Ascending aorta (tissue), 2 donors: ENCODE measurements at regions of chr14 and their contacts with region 1.

Region 1: DNA sequence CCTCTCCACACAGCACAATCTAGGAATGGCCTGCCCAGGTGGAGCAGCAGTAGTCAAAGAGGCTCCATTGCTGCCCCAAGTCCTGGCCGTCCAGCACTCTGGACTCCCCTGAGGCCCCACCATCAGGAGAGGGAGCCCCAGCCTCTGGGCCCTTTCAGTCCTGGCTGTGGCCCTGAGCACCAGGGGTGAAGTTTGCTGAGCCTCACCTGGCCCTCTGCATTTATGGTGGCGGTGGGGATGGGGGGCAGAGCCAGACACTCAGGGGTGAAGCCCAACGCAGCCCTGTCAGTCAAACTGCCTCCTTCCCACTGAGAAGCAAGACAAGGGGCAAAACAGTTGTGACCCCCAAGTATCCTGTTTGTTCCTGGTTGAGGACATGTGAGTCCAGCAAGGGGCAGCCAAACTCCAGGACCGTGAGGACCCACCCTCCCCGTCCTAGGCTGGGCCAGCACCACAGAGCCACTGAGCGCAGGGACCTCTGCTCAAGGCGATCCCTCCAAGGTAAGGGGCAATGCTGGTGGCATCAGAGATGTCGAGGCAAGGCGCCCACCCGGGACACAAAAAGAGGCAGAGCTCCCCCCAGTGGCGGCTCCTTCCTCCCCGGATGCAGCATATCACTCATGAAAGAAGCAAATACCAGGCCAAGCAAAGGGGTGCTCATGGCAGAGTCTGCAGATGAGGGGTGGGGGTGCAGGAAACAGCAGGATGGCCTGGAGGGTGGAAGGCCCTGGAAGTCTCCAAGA is 4.8 kb upstream of the AMN start:
- DNase-seq: no peak
- H3K4me3 ChIP-seq: no peak overlapping the region
- H3K27ac ChIP-seq: no peak overlapping the region
- H3K4me1 ChIP-seq: no peaks in the 10 kb centered on the region
- H3K27me3 ChIP-seq: no peaks in the 10 kb centered on the region
- CTCF ChIP-seq: peak; percentile 40 to 57 (median 55)

Region 2: GRCh38 chr14:102694530-102695166 is 223.0 kb before region 1 on chr14:
- intact Hi-C with region 1: loop called (anchors 1 kb)
- DNase-seq: peak in 1 of 2 donors; percentile 74
- H3K4me3 ChIP-seq: no peak overlapping the region
- H3K27ac ChIP-seq: no peak overlapping the region
- H3K4me1 ChIP-seq: no peaks in the 10 kb centered on the region
- H3K27me3 ChIP-seq: no peaks in the 10 kb centered on the region
- CTCF ChIP-seq: peak; percentile 57 to 71 (median 60)

Region 3: DNA sequence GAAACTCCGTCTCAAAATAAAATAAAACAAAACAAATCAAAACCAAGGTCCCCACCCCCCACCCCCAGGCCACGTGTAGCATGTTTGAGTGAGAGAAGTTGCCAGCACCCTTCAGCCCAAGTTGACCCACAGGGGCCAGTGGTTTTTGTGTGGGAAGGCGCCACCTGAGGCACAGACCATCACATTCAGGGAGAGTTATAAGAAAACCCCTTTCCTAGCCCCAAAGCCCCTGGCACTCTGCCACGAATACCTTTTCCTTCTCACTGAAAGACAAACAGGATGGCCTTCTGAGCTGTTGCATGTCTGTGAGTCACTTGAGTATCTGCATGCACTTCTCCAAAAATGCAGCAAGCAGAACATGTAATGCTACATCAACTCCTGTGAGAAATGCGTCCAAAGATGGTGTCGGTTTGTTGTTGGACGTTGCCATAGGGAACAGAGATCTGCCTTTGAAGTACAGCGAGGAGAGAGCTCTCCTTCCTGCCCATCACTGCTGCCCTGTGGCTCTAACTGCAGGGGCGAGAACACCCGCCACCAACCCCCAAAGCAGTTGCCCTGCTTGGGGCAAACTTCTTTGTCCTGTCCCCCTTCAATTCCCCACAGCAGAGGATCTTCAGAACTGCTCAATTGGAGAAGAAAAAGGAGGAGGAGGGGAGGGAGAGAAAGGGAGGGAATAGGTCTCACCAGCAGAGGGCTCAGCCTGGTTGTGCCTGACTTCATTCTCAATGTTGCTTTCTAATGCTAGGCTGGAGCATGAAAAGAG is 143.1 kb before region 1 on chr14:
- intact Hi-C with region 1: loop called (anchors 5 kb)
- DNase-seq: no peak
- H3K4me3 ChIP-seq: no peak overlapping the region
- H3K27ac ChIP-seq: peak overlapping the region in 1 of 2 donors; percentile 1
- H3K4me1 ChIP-seq: peaks cover 0 to 8% of the 10 kb centered on the region in 2 donors
- H3K27me3 ChIP-seq: no peaks in the 10 kb centered on the region
- CTCF ChIP-seq: peak; percentile 43 to 67 (median 54)